Left cardiac atrium (tissue), 4 donors: ENCODE measurements at regions of chr5 and their contacts with region 1.

Region 1: GRCh38 chr5:151051066-151051930 is 29.5 kb downstream of the TNIP1 start:
- DNase-seq: peak; percentile 88
- ATAC-seq: peak; percentile 84 to 85

Region 2: DNA sequence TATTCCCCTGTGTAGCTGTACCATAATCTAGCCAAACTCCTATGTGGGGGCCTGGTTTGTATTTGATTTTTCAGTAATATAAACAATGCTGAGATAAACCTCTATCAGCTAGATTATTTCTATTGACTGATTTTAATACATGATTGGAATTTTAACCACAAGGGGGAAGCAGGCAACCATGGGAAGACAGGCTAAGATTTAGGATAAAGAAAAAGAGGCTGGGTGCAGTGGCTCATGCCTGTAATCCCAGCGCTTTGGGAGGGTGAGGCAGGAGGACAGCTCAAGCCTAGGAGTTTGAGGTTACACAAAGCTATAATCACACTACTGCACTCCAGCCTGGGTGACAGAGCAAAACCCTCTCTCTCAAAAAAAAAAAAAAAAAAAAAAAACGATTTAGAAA is 49.0 kb before region 1 on chr5:
- intact Hi-C with region 1: loop called (anchors 2 to 5 kb)
- DNase-seq: no peak
- ATAC-seq: peak in 1 of 2 donors; percentile 7

Region 3: DNA sequence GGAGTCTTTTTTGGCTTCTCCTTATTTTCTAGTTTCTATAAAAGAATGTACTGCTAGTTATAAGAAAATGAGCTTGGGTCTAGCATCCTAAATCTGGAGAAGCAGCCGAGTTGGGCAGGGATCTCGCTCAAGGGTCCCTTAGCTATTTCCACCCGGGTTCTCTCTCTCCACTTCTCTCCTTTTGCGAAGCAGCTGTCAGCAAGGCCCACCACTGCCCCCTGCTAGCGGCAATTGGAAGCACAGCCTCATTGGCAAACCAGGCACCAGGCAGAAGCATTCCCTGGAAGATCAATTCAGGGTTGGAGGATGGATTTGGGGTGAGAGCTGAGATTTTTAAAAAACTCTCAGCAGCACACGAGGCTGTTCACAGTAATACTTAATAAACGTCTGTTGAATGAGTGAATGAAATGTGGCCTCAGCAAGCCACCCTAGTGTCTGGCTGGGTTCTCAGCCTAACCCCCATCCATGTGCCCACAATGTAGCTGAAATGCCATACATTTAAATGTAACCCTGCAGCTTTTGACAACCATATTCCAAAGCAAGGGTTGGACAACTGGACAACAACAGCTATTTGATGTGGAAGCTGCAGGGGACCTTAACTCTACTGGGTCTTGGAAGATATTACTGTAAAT is 64.1 kb after region 1 on chr5:
- intact Hi-C with region 1: loop called (anchors 1 to 2 kb)
- DNase-seq: peak; percentile 76
- ATAC-seq: peak; percentile 58 to 77

Region 4: GRCh38 chr5:151239237-151239861 is 188.1 kb after region 1 on chr5:
- intact Hi-C with region 1: loop called in 1 of 2 experiments (anchors 5 kb)
- DNase-seq: peak; percentile 85
- ATAC-seq: peak in 1 of 2 donors; percentile 75